WTC11 (cell line): ENCODE measurements at regions of chr13 and their contacts with region 1.

Region 1: GRCh38 chr13:75219479-75220237 is 262.3 kb downstream of the TBC1D4 start:
- DNase-seq: peak; percentile 86
- ATAC-seq: peak; percentile 97
- H3K4me3 Mint-ChIP-seq: peak overlapping the region; percentile 65
- H3K27ac Mint-ChIP-seq: no peak overlapping the region
- H3K4me1 Mint-ChIP-seq: peaks cover 3% of the 10 kb centered on the region
- H3K27me3 Mint-ChIP-seq: peaks cover 4% of the 10 kb centered on the region; the same call in 1 of the 2 replicates
- CTCF ChIP-seq: peak; percentile 88

Region 2: GRCh38 chr13:74575729-74576125 is 643.9 kb before region 1 on chr13:
- CTCF ChIA-PET with region 1: interaction called, 24 read pairs
- POLR2A ChIA-PET with region 1: no interaction called
- DNase-seq: peak; percentile 79
- ATAC-seq: peak; percentile 92
- H3K4me3 Mint-ChIP-seq: peak overlapping the region; percentile 71
- H3K27ac Mint-ChIP-seq: no peak overlapping the region
- H3K4me1 Mint-ChIP-seq: peaks cover 28% of the 10 kb centered on the region
- H3K27me3 Mint-ChIP-seq: peaks cover 15% of the 10 kb centered on the region
- CTCF ChIP-seq: no peak

Region 3: DNA sequence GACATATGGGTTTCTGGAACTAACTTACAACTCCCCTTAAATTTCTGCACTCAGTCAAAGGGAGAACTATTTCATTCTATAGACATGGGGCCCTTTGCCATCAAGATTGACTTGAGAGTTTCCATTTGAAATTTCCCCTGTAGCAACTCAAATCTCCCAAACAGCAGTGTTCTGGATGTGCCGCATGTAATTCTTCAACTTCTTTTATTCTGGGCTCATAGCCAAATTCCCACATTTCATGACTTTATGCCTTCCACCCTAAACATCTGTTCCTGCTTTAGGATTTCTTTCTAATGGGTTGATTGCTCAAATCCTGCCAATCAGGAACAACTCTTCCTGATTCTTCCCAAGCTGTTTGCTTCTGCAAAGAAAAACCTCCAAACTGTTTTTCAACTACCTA is 73.7 kb before region 1 on chr13:
- CTCF ChIA-PET with region 1: no interaction called
- POLR2A ChIA-PET with region 1: no interaction called
- DNase-seq: no peak
- ATAC-seq: no peak
- H3K4me3 Mint-ChIP-seq: no peak overlapping the region
- H3K27ac Mint-ChIP-seq: no peak overlapping the region
- H3K4me1 Mint-ChIP-seq: peaks cover 9% of the 10 kb centered on the region
- H3K27me3 Mint-ChIP-seq: no peaks in the 10 kb centered on the region
- CTCF ChIP-seq: no peak

Region 4: DNA sequence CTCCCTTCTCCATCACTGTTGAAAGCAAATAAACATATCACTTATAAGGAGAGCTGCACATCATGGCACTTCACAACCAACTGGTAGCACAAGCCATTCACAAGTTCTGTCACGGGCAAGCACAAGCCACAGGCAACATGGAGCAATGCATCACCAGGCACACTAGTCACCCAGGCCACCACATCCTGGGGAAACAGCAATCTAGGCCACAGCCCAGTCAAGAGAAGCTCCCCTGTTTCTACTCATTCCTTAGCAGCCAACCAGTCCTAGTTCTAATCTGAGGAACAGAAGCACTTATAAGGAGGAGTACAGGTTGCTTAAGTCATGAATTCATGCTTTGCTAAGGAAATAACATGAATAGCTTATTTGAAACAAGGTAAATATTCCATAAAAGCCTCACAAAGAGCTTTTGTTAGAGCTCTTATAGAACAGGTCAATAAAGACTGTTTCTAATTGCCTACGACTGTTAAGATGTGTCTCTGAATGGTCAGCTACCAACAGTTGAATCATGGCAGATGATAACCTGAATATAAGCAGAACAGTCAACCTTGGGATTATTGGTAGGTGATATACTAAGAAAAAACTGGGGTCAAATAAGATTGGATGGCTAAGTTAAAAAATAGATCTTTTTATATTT is 93.3 kb after region 1 on chr13:
- CTCF ChIA-PET with region 1: no interaction called
- POLR2A ChIA-PET with region 1: no interaction called
- DNase-seq: no peak
- ATAC-seq: no peak
- H3K4me3 Mint-ChIP-seq: no peak overlapping the region
- H3K27ac Mint-ChIP-seq: no peak overlapping the region
- H3K4me1 Mint-ChIP-seq: peaks cover 3% of the 10 kb centered on the region; the same call in 1 of the 2 replicates
- H3K27me3 Mint-ChIP-seq: no peaks in the 10 kb centered on the region
- CTCF ChIP-seq: no peak